Ovary (tissue), 10 donors: ENCODE measurements at regions of chr3 and their contacts with region 1.

Region 1: DNA sequence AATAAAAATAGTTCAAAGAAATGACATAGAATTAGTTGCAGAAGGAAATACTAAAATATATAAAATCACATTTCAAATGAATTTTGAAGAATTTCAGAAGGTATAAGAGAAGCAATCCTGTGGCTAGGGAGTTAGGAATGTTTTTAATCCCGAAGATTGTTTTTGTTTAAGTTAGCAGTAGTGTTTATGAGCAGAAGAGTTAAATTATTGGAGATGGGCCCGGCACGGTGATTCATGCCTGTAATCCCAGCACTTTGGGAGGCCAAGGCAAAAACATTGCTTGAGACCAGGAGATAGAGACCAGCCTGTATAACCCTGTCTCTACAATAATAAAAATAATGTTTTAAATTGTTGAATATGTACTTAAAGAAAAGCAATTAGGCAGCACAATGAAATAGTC is 432.5 kb downstream of the MFSD1 start:
- DNase-seq: peak in 2 of 5 donors; percentile 12 to 23
- H3K4me3 ChIP-seq: no peak overlapping the region
- H3K27ac ChIP-seq: no peak overlapping the region
- H3K4me1 ChIP-seq: no peaks in the 10 kb centered on the region
- H3K27me3 ChIP-seq: no peaks in the 10 kb centered on the region
- CTCF ChIP-seq: no peak
- EP300 ChIP-seq: no peak
- POLR2A ChIP-seq: no peak

Region 2: GRCh38 chr3:159260049-159260662 is 25.9 kb after region 1 on chr3:
- intact Hi-C with region 1: loop called in 1 of 4 experiments (anchors 2 kb)
- DNase-seq: peak in 3 of 5 donors; percentile 15 to 50 (median 34)
- H3K4me3 ChIP-seq: no peak overlapping the region
- H3K27ac ChIP-seq: no peak overlapping the region
- H3K4me1 ChIP-seq: no peaks in the 10 kb centered on the region
- H3K27me3 ChIP-seq: no peaks in the 10 kb centered on the region
- CTCF ChIP-seq: peak; percentile 31 to 78 (median 54)
- EP300 ChIP-seq: no peak
- POLR2A ChIP-seq: no peak